ENCODE measurements at regions of chr9 and their contacts with region 1.

Region 1: GRCh38 chr9:137521405-137521985 is 28.7 kb downstream of the PNPLA7 start:
- DNase-seq: no peak
- H3K4me3 ChIP-seq: no peak overlapping the region
- H3K27ac ChIP-seq: no peak overlapping the region
- H3K4me1 ChIP-seq: no peaks in the 10 kb centered on the region
- H3K27me3 ChIP-seq: no peaks in the 10 kb centered on the region
- CTCF ChIP-seq: no peak

Region 2: GRCh38 chr9:137286975-137287383 is 234.5 kb before region 1 on chr9:
- CTCF ChIA-PET with region 1: no interaction called
- POLR2A ChIA-PET with region 1: interaction called, 15 read pairs
- intact Hi-C with region 1: no loop called
- DNase-seq: peak; percentile 63 to 69
- H3K4me3 ChIP-seq: no peak overlapping the region
- H3K27ac ChIP-seq: no peak overlapping the region
- H3K4me1 ChIP-seq: no peaks in the 10 kb centered on the region
- H3K27me3 ChIP-seq: no peaks in the 10 kb centered on the region
- CTCF ChIP-seq: peak; percentile 74

Region 3: GRCh38 chr9:137302176-137302994 is 219.1 kb before region 1 on chr9 and contains the start of gene NRARP:
- CTCF ChIA-PET with region 1: no interaction called
- POLR2A ChIA-PET with region 1: no interaction called
- intact Hi-C with region 1: loop called (anchors 5 kb)
- DNase-seq: peak; percentile 63 to 95
- H3K4me3 ChIP-seq: peak within 1 kb of the TSS; percentile 98
- H3K27ac ChIP-seq: peak within 1 kb of the TSS; percentile 75
- H3K4me1 ChIP-seq: peaks cover 20% of the 10 kb centered on the region
- H3K27me3 ChIP-seq: no peaks in the 10 kb centered on the region
- CTCF ChIP-seq: peak; percentile 65; the same call in 1 of the 2 replicates
- total RNA-seq, gene NRARP: 20.6 and 25.8 TPM in 2 replicates

Region 4: DNA sequence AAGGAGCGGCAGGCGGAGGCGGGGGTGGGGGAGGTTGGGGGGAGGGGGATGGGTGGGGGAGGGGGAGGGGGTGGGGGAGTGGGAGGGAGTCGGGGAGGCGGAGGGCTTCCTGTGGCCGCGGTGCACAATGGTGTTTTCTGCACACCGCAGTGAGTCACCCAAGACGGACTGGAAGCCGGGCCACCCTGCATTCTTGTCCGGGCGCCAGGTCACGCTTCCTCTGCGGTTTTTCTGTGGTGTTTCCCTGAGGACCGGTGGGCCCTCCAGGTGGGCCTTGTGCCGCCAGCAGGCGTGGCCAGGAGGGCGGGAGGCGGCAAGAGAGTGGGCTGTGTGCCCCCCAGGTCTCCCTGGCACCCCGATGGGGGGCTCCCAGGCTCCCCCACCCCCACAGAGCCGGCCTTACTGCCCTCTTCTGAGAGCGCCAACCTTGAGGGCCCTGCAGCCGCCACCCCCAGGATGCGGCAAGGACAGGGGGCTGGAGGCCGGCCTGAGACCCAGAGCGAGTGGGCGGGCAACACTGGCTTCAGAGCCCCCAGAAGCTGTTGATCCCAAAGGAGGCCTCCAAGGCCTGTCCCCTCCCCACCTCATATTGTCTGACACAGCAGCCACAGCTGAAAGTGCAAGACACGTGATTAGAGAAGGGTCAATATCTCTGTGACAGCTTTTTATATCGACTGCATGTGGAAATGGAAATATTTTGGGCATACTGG is 109.7 kb before region 1 on chr9:
- CTCF ChIA-PET with region 1: no interaction called
- POLR2A ChIA-PET with region 1: interaction called, 15 read pairs
- intact Hi-C with region 1: no loop called
- DNase-seq: peak; percentile 87 to 93
- H3K4me3 ChIP-seq: peak overlapping the region; percentile 40; the same call in 1 of the 2 replicates
- H3K27ac ChIP-seq: peak overlapping the region; percentile 43; the same call in 1 of the 2 replicates
- H3K4me1 ChIP-seq: peaks cover 18% of the 10 kb centered on the region
- H3K27me3 ChIP-seq: no peaks in the 10 kb centered on the region
- CTCF ChIP-seq: no peak

Region 5: DNA sequence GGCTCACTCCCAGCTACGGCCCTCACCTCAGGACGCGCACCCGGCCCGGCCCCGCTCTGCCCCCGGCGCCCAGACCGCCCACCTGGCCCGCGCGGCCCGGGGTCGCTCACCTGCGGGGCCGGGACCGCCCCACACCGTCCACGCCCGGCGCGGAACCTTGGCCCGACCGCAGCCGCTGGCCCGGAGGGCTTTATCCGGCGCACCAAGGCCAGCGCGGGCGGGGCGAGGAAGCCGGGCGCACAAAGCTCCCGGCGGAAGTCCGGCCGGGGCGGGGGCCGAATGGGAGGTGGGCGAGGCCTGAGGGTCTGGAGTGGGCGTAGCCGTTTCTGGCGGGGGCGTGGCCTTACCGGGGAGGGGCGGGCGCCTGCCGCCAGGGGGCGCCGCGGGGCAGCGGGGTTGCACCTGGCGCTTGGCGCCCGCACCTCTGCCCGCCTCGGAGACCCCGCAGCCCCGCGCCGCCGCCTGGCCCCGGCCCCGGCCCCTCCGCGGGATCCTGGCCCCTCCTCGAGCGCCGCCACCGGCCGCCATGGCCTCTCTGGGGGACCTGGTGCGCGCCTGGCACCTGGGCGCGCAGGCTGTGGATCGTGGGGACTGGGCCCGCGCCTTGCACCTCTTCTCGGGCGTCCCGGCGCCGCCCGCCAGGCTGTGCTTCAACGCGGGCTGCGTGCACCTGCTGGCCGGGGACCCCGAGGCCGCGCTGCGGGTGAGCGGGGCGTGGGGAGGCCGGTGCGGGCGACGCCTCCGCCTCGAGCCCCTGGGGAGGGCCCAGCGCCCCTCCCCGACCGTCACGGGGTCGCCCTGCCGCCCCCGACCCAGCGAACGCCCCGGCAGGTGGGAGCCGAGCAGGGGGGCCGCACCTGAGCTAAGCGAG is 98.3 kb before region 1 on chr9 and contains the starts of genes EXD3 and NOXA1:
- CTCF ChIA-PET with region 1: no interaction called
- POLR2A ChIA-PET with region 1: interaction called, 24 read pairs
- intact Hi-C with region 1: loop called (anchors 5 kb)
- DNase-seq: peak; percentile 72 to 97
- H3K4me3 ChIP-seq: peak within 1 kb of the TSS; percentile 92
- H3K27ac ChIP-seq: peak within 1 kb of the TSS; percentile 83
- H3K4me1 ChIP-seq: peaks cover 17% of the 10 kb centered on the region
- H3K27me3 ChIP-seq: no peaks in the 10 kb centered on the region
- CTCF ChIP-seq: peak; percentile 63
- total RNA-seq, gene EXD3: 23.7 and 38.5 TPM in 2 replicates
- total RNA-seq, gene NOXA1: 10.5 and 22.8 TPM in 2 replicates

Region 6: GRCh38 chr9:137461663-137462395 is 59.7 kb before region 1 on chr9:
- CTCF ChIA-PET with region 1: no interaction called
- POLR2A ChIA-PET with region 1: no interaction called
- intact Hi-C with region 1: no loop called
- DNase-seq: no peak
- H3K4me3 ChIP-seq: no peak overlapping the region
- H3K27ac ChIP-seq: no peak overlapping the region
- H3K4me1 ChIP-seq: 0 out of 2 replicates have a peak, but pooled peaks cover 4% of the 10 kb centered on the region
- H3K27me3 ChIP-seq: 0 out of 2 replicates have a peak, but pooled peaks cover 6% of the 10 kb centered on the region
- CTCF ChIP-seq: no peak

Region 7: GRCh38 chr9:137547687-137548543 is 26.4 kb after region 1 on chr9:
- CTCF ChIA-PET with region 1: no interaction called
- POLR2A ChIA-PET with region 1: no interaction called
- intact Hi-C with region 1: no loop called
- DNase-seq: no peak
- H3K4me3 ChIP-seq: no peak overlapping the region
- H3K27ac ChIP-seq: no peak overlapping the region
- H3K4me1 ChIP-seq: peaks cover 8% of the 10 kb centered on the region
- H3K27me3 ChIP-seq: peaks cover 7% of the 10 kb centered on the region; the same call in 1 of the 2 replicates
- CTCF ChIP-seq: no peak

Measured in PC-9 (cell line).